Activated CD4-positive, alpha-beta T cell treated with anti-CD3 and anti-CD28 coated beads, Interleukin-2, amount 10 ng/mL, durations not matched to agents 7 days and 5 days (primary cell): ENCODE measurements at regions of chr1 and their contacts with region 1.

Region 1: DNA sequence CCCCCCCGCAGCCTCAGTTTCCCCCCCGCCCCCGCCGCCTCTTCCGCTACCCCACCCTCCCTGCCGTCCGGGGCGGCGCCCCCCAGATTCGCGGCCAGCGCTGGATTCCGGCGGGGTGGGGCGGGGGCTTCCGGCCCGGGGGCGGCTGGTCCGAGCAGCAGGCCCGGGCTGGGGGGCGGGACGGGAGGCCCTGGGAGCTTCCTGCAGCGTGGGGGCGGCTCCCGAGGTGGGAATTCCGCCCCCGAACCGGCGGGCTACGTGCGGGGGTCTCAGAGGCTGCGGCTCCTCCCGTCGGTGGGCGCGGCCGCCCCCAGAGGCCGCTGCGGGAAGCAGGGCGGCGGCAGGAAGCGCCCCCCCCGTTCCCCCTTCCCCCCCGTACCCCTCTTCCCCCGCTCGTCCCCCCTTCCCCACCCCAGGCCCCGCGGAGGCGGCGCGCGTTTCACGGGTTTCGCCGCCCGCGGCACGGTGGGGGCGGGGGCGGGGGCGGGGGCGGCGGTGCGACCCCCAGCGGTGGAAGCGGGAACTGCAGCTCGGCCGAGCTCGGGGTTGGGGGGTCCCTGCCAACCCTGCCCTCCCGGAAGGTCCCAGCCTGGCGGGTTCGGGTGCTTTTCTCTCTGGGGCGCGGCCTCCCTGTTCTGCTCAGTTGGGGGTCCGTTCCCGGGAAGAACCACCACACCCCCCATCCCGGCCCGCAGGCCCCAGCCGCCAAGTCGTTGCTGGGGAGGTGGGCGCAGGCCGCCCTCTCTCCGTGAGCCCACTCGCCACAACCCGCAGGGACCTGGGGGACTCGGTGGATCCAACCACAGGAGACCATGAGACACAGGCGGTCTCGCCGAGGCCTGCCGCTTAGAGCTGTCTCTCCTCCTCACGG is 76.3 kb downstream of the MORN1 start:
- DNase-seq: peak; percentile 50
- H3K4me3 Mint-ChIP-seq: peak overlapping the region; percentile 56
- H3K27ac Mint-ChIP-seq: peak overlapping the region; percentile 78
- H3K4me1 Mint-ChIP-seq: peaks cover 19% of the 10 kb centered on the region
- H3K27me3 Mint-ChIP-seq: no peaks in the 10 kb centered on the region

Region 2: DNA sequence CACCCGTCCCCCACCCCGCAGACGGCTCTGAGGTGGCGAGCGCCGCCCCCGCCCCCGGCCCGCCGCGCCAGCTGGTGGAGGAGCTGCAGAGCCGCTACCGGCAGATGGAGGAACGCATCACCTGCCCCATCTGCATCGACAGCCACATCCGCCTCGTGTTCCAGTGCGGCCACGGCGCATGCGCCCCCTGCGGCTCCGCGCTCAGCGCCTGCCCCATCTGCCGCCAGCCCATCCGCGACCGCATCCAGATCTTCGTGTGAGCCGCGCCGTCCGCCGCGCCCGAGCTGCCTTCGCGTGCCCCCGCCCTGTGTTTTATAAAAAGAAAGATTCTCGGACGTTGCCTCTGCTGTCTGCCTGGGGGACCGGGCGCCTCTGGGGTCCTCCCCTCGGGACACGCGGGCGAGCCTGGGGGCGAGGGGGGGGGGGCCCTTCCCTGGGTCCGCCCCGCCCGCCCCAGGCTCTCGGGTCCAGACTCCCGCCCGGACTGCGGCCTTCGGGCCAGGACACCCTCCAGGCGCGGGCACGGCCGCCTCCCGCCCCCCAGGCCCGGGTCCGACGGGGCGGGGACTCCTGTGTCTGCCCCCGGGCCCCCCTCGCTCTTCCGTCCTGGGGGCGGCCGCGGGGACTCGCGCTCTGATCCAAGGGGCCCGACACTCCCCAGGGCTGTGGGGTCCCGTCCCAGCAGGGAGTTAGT is 684.6 kb before region 1 on chr1:
- CTCF ChIA-PET with region 1: no interaction called
- POLR2A ChIA-PET with region 1: no interaction called
- DNase-seq: peak; percentile 94
- H3K4me3 Mint-ChIP-seq: peak overlapping the region; percentile 74
- H3K27ac Mint-ChIP-seq: peak overlapping the region; percentile 97
- H3K4me1 Mint-ChIP-seq: peaks cover 7% of the 10 kb centered on the region
- H3K27me3 Mint-ChIP-seq: peaks cover 4% of the 10 kb centered on the region

Region 3: DNA sequence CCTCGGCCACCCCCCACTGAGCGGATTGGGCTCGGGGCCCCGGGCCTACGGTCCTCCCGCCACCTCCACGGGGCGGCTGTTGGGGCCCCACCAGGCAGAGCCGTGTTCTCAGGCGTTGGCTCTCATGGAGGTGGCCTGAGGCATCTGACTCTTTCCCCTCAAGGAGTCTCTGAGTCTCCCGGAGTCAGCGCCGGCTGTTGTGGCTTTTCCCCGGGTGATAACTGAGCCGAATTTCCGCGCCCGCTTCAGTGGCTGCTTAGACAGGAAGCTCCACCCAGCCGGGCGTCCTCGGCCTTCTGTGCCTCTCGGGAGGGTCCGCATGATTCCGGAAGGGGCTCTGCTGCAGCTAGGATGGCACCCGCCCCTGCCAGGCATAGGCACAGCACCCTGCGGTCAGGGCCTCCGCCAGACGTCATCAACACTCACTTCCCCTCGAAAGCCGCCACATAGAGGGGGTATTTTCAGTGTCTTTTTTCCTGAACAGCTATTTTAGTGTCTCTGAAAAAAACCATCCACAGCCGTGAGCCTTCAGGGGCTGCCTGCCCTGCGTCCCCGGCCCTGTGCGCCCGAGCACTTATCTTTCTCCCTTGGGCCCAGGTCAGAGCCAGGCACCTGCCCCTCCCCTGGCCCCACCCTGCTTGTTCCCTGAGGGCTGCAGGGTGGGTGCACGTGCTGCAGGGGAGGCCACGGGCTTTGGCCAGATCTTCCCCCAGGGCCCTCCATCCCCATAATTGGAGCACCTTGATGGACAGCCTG is 14.0 kb before region 1 on chr1:
- CTCF ChIA-PET with region 1: interaction called, 21 read pairs
- POLR2A ChIA-PET with region 1: no interaction called
- DNase-seq: peak; percentile 94
- H3K4me3 Mint-ChIP-seq: peak overlapping the region; percentile 75
- H3K27ac Mint-ChIP-seq: peak overlapping the region; percentile 98
- H3K4me1 Mint-ChIP-seq: peaks cover 61% of the 10 kb centered on the region
- H3K27me3 Mint-ChIP-seq: no peaks in the 10 kb centered on the region

Region 4: DNA sequence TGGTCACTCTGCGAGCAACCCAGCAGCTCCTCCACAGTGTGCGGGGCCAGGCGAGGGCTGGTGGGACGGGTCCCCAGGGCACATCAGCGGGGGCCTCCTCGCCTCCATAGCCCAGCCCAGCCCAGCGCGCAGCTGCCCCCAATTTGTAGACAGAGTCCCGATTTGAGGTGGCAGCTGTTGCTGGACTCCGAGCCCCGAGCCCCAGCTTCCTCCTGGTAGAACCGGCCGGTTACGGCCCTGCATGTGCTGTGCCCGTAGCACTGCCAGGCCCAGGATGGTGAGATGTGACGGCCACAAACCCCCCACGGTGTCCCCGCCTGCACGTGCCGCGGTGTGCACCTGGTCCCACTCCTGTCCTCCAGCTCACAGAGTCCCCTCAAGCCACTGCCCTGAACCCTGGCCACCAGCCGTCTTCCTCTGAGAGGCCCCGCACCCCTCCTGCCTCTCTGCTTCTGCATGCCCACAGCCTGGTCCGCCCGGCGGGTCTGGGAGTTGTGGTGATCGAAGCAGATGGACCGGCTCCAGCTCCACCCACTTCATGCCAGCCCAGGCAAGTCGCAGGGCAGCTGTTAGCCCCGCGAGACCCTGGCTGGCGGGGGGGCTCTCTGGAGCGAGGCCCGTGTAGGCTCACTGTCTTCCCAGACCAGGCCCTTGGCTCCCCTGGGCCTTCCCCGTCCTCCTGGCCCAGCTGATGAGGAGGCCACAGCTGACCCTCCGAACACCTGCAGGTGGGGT is 20.9 kb after region 1 on chr1:
- CTCF ChIA-PET with region 1: no interaction called
- POLR2A ChIA-PET with region 1: no interaction called
- DNase-seq: no peak
- H3K4me3 Mint-ChIP-seq: no peak overlapping the region
- H3K27ac Mint-ChIP-seq: no peak overlapping the region
- H3K4me1 Mint-ChIP-seq: no peaks in the 10 kb centered on the region
- H3K27me3 Mint-ChIP-seq: no peaks in the 10 kb centered on the region

Region 5: DNA sequence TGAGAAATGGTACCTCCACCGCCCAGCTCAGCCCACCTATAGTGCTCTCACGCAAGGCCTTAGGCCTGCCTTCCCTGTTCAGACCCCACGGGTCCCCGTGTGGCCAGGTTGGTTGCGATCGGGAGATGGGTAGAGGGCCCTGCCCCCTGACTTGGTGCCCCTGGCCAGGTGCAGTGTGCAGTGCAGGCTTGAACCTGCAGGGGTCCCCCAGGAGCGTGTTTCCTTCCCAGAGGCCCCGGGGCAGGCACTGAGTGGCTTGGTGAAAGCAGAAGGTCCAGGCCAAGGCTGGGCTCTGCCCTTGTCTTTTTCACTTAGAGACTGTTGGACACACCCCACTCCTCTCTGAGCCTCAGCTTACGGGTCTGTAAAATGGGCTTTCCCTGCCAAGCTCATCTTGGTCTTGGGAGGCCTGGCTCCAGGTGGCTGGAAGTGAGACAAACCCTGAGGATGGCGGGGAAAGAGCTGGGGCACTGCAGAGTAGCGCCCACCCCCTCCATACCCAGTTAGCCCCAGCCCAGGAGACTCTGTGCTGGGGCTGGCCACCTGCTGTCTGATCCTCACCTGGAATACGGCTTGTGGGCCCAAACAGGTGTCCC is 224.4 kb after region 1 on chr1:
- CTCF ChIA-PET with region 1: no interaction called
- POLR2A ChIA-PET with region 1: no interaction called
- DNase-seq: peak; percentile 32
- H3K4me3 Mint-ChIP-seq: no peak overlapping the region
- H3K27ac Mint-ChIP-seq: no peak overlapping the region
- H3K4me1 Mint-ChIP-seq: peaks cover 7% of the 10 kb centered on the region
- H3K27me3 Mint-ChIP-seq: peaks cover 10% of the 10 kb centered on the region